Naive thymus-derived CD4-positive, alpha-beta T cell (primary cell): ENCODE measurements at regions of chr13 and their contacts with region 1.

Region 1: DNA sequence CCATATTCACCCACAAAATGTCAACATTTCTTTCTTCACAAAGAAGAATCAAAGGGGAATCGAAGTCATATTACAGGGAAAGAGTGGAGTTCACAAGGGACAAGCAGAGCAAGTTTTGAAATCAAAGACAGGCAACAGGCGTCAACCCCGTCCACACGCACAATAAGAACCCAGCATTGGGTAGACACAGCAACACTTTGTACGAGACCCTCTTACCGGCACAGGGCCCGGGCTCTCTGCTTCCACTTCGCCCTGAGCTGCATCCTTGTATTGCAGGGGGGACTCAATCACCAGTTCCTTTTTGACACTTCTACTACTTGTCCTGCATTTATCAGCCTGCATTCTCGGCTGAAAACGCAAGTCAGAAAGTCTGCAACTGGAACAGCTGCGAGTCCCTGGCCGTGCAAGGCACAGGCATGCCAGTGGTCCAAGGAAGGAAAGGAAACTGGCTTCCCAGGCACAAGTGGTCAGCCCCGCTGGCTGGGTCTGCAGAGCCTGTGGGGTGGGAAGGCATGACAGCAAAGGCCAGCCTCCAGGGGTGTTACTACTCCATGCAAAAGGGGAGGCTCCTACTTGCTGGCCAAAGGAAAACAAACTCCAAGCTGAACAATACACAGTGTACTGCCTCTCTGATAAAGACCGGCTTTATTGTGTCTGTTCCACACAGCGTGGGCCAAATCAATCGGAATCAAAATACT is at the start of gene DOCK9:
- DNase-seq: no peak
- ATAC-seq: no peak
- H3K4me3 ChIP-seq: no peak within 1 kb of the TSS
- H3K4me3 Mint-ChIP-seq: peak within 1 kb of the TSS in 6 of 10 donors; percentile 24 to 63 (median 42)
- H3K27ac ChIP-seq: no peak within 1 kb of the TSS
- H3K27ac Mint-ChIP-seq: peak within 1 kb of the TSS in 8 of 9 donors; percentile 14 to 88 (median 66)
- H3K4me1 ChIP-seq: peaks cover 12 to 69% of the 10 kb centered on the region in 2 donors
- H3K4me1 Mint-ChIP-seq: peaks cover 36 to 96% (median 93%) of the 10 kb centered on the region in 7 donors
- H3K27me3 ChIP-seq: no peaks in the 10 kb centered on the region
- H3K27me3 Mint-ChIP-seq: no peaks in the 10 kb centered on the region
- total RNA-seq, gene DOCK9: 75.1 to 214 (median 128) TPM

Region 2: DNA sequence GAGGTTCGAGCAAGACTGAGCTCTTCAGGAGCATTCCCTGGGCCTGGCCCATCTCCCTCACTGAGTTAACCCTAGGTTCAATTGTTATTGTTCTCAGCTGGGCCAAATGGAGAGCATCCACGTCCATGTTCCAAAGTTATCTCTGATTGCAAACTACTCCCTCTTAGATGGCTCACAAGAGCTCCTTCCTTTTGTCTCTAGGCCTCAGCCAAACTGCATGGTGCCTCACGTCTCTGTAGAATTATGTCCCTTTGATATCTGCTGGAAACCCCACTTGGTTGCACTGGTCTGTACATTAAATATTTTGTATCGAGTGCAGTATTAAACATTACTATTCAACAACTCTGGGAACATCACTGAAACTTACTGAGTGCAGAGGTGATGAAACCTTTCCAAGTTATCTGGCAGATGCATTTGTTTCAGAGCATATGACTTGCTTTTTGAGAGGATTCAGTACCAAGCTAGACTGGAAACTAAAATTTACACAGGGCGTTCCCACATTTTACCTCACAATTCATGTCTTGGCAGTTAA is 38.0 kb before region 1 on chr13:
- CTCF ChIA-PET with region 1: no interaction called
- POLR2A ChIA-PET with region 1: no interaction called
- intact Hi-C with region 1: loop called in 1 of 2 experiments (anchors 5 kb)
- DNase-seq: no peak
- ATAC-seq: no peak
- H3K4me3 ChIP-seq: no peak overlapping the region
- H3K4me3 Mint-ChIP-seq: no peak overlapping the region
- H3K27ac ChIP-seq: no peak overlapping the region
- H3K27ac Mint-ChIP-seq: peak overlapping the region in 7 of 9 donors; percentile 26 to 89 (median 46)
- H3K4me1 ChIP-seq: no peaks in the 10 kb centered on the region
- H3K4me1 Mint-ChIP-seq: peaks cover 2 to 71% (median 50%) of the 10 kb centered on the region in 7 donors
- H3K27me3 ChIP-seq: no peaks in the 10 kb centered on the region
- H3K27me3 Mint-ChIP-seq: no peaks in the 10 kb centered on the region

Region 3: GRCh38 chr13:98961503-98962105 is 16.1 kb before region 1 on chr13:
- CTCF ChIA-PET with region 1: no interaction called
- POLR2A ChIA-PET with region 1: interaction called, 3 read pairs
- intact Hi-C with region 1: loop called in 1 of 2 experiments (anchors 1 kb)
- DNase-seq: no peak
- ATAC-seq: no peak
- H3K4me3 ChIP-seq: no peak overlapping the region
- H3K4me3 Mint-ChIP-seq: no peak overlapping the region
- H3K27ac ChIP-seq: no peak overlapping the region
- H3K27ac Mint-ChIP-seq: no peak overlapping the region
- H3K4me1 ChIP-seq: no peaks in the 10 kb centered on the region
- H3K4me1 Mint-ChIP-seq: peaks cover 0 to 38% (median 24%) of the 10 kb centered on the region in 7 donors
- H3K27me3 ChIP-seq: no peaks in the 10 kb centered on the region
- H3K27me3 Mint-ChIP-seq: no peaks in the 10 kb centered on the region

Region 4: GRCh38 chr13:99356158-99357091 is 378.7 kb after region 1 on chr13:
- CTCF ChIA-PET with region 1: no interaction called
- POLR2A ChIA-PET with region 1: no interaction called
- intact Hi-C with region 1: no loop called
- DNase-seq: peak in 8 of 9 donors; percentile 58 to 94 (median 92)
- ATAC-seq: peak; percentile 77
- H3K4me3 ChIP-seq: peak overlapping the region; percentile 25
- H3K4me3 Mint-ChIP-seq: peak overlapping the region; percentile 66 to 86 (median 78)
- H3K27ac ChIP-seq: peak overlapping the region; percentile 95
- H3K27ac Mint-ChIP-seq: peak overlapping the region; percentile 97 to 100 (median 99)
- H3K4me1 ChIP-seq: peaks cover 95 to 97% of the 10 kb centered on the region in 2 donors
- H3K4me1 Mint-ChIP-seq: peaks cover 78 to 100% (median 100%) of the 10 kb centered on the region in 7 donors
- H3K27me3 ChIP-seq: no peaks in the 10 kb centered on the region
- H3K27me3 Mint-ChIP-seq: no peaks in the 10 kb centered on the region

Region 5: GRCh38 chr13:99871249-99871898 is 893.7 kb after region 1 on chr13:
- CTCF ChIA-PET with region 1: no interaction called
- POLR2A ChIA-PET with region 1: no interaction called
- intact Hi-C with region 1: no loop called
- DNase-seq: no peak
- ATAC-seq: no peak
- H3K4me3 ChIP-seq: no peak overlapping the region
- H3K4me3 Mint-ChIP-seq: no peak overlapping the region
- H3K27ac ChIP-seq: no peak overlapping the region
- H3K27ac Mint-ChIP-seq: no peak overlapping the region
- H3K4me1 ChIP-seq: no peaks in the 10 kb centered on the region
- H3K4me1 Mint-ChIP-seq: no peaks in the 10 kb centered on the region
- H3K27me3 ChIP-seq: no peaks in the 10 kb centered on the region
- H3K27me3 Mint-ChIP-seq: peaks cover 0 to 34% (median 0%) of the 10 kb centered on the region in 5 donors